Calu3 (cell line): ENCODE measurements at regions of chr6 and their contacts with region 1.

Region 1: DNA sequence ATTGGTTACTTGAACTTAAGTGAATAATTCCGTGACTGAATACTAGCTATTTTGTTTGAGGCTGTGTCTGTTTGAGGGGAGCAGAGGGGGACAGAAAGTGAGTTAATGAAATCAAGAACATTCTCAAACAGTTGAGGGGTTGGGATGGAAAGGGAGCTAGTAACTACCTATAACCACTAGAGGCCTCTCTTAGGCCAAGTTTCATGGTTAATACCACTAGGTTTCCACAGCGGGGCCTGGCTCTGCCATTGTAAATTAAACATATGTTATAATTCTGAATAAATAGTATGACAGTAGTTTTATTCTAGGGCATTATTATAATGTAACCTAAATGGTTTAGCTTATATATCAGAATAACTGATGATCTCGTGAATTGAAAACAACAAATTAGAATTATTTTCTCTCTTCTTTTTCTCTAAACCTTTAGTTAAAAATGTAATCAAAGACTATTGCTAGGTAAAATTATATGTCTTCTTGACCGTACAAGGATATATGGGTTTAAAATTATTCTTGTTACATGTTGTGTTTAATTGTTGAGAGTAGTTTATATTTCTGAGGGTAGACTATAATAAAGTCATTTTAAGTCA is 108.1 kb downstream of the BCKDHB start:
- DNase-seq: peak; percentile 39
- H3K4me3 Mint-ChIP-seq: no peak overlapping the region
- H3K27ac Mint-ChIP-seq: no peak overlapping the region
- H3K4me1 Mint-ChIP-seq: peaks cover 22% of the 10 kb centered on the region
- H3K27me3 Mint-ChIP-seq: no peaks in the 10 kb centered on the region
- CTCF ChIP-seq: peak; percentile 56

Region 2: DNA sequence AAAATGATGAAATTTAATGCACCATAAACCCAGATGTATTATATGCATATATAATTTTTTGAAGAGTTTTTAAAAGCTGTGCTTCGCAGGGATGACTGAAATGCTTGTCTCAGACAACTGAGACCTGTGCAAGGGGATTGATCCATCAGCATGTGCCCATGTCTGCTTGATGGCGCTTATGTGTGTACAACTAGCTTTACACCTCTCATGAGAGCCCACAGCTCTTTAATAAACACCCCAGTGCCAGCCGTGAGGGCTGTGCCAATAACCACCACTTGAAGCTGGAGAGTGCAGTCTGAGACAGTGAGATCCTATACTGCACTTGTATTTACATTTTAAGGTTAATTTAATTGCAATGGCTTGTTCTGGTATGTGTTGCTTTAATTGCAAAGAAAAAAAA is 117.4 kb after region 1 on chr6:
- CTCF ChIA-PET with region 1: no interaction called
- intact Hi-C with region 1: loop called (anchors 2 kb)
- DNase-seq: no peak
- H3K4me3 Mint-ChIP-seq: no peak overlapping the region
- H3K27ac Mint-ChIP-seq: no peak overlapping the region
- H3K4me1 Mint-ChIP-seq: no peaks in the 10 kb centered on the region
- H3K27me3 Mint-ChIP-seq: no peaks in the 10 kb centered on the region
- CTCF ChIP-seq: no peak

Region 3: DNA sequence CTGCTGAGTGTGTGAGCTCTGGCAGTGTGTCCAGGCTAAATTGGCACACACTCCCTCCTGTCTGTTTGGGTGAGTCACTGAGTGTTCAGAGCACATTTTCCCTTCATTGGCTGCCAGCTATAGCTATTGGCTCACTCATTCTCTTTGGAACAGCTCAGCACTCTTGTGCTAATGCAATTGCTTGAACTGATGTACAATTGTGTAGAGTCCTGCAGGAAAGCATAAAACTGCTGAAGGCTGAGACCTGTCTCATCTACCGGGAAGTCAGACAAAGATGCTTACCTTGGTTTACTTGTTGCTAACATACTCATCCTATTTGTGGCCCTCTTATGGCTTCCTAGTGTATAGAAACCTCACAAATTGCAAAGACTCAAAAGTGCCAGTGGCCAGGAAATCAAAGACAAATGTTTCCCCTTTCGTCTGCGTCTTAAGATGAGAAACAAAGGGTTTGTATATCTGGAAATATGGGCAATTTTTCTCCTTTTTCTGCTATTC is 243.0 kb after region 1 on chr6:
- CTCF ChIA-PET with region 1: no interaction called
- intact Hi-C with region 1: loop called (anchors 10 kb)
- DNase-seq: peak; percentile 52
- H3K4me3 Mint-ChIP-seq: no peak overlapping the region
- H3K27ac Mint-ChIP-seq: no peak overlapping the region
- H3K4me1 Mint-ChIP-seq: peaks cover 33% of the 10 kb centered on the region
- H3K27me3 Mint-ChIP-seq: no peaks in the 10 kb centered on the region
- CTCF ChIP-seq: no peak